Breast epithelium (tissue), 4 donors: ENCODE measurements at regions of chr1 and their contacts with region 1.

Region 1: GRCh38 chr1:206912445-206913095 is 9.2 kb downstream of the FCMR start:
- DNase-seq: peak; percentile 69 to 75
- H3K4me3 ChIP-seq: no peak overlapping the region
- H3K27ac ChIP-seq: no peak overlapping the region
- H3K4me1 ChIP-seq: no peaks in the 10 kb centered on the region
- H3K27me3 ChIP-seq: no peaks in the 10 kb centered on the region
- CTCF ChIP-seq: peak; percentile 80 to 90 (median 84)
- POLR2A ChIP-seq: no peak

Region 2: GRCh38 chr1:206004783-206005164 is 907.8 kb before region 1 on chr1:
- intact Hi-C with region 1: loop called (anchors 5 kb)
- DNase-seq: peak in 1 of 2 donors; percentile 79
- H3K4me3 ChIP-seq: no peak overlapping the region
- H3K27ac ChIP-seq: peak overlapping the region; percentile 77 to 80
- H3K4me1 ChIP-seq: peaks cover 5% of the 10 kb centered on the region in 2 donors
- H3K27me3 ChIP-seq: no peaks in the 10 kb centered on the region
- CTCF ChIP-seq: no peak
- POLR2A ChIP-seq: no peak

Region 3: DNA sequence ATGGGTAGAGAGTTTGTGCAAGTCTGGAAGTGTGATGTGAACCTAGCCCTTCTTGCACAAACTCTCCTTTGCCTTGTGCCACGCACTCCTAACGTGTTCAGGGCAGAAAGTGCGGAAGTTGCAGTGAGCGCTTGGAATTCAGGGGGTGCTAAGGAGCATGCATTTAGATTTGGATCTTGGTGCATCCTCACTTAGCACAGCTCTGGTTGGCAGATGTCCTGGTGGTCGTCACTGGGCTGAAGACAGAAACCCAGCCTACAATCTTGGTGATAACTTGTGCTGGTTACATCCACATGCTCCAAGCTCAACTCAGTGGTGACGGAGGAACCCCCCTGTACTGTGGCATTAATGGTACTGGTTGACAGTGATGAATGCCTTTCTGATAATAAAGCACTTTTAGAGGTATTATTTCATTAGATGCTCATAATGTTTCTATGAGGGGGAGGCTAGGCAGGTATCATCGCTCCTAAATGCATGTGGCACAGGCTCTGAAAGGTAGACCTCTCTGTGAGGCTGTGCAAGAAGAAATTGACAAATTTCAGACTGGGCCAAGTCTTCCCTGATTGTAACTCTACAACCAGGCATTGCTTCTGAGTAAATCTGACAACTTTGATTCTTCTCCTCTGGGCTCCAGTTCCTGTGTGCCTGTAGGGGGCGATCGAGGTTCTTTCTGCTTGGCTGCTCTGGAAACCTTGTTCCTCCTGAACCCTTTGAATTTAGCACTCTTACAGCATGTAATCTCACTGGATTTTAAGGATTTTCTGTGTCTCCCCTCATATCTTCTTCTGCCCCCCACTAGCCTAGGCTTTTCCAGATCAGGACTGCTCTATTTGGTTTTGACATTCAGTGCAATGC is 187.2 kb before region 1 on chr1:
- intact Hi-C with region 1: loop called (anchors 5 kb)
- DNase-seq: no peak
- H3K4me3 ChIP-seq: no peak overlapping the region
- H3K27ac ChIP-seq: peak overlapping the region in 1 of 2 donors; percentile 24
- H3K4me1 ChIP-seq: peaks cover 0 to 27% of the 10 kb centered on the region in 2 donors
- H3K27me3 ChIP-seq: no peaks in the 10 kb centered on the region
- CTCF ChIP-seq: peak in 2 of 3 donors; percentile 11 to 16
- POLR2A ChIP-seq: no peak

Region 4: GRCh38 chr1:206734499-206735142 is 177.9 kb before region 1 on chr1:
- intact Hi-C with region 1: loop called (anchors 5 kb)
- DNase-seq: no peak
- H3K4me3 ChIP-seq: no peak overlapping the region
- H3K27ac ChIP-seq: no peak overlapping the region
- H3K4me1 ChIP-seq: peaks cover 7 to 11% of the 10 kb centered on the region in 2 donors
- H3K27me3 ChIP-seq: no peaks in the 10 kb centered on the region
- CTCF ChIP-seq: peak; percentile 72 to 78 (median 73)
- POLR2A ChIP-seq: no peak